ENCODE measurements at regions of chr14 and their contacts with region 1.

Region 1: GRCh38 chr14:103346286-103346685 is 12.2 kb downstream of the EIF5 start:
- DNase-seq: no peak
- ATAC-seq: peak in 1 of 2 experiments; percentile 8; a peak in 3 of 6 replicates
- H3K4me3 ChIP-seq: no peak overlapping the region
- H3K27ac ChIP-seq: no peak overlapping the region
- H3K4me1 ChIP-seq: no peaks in the 10 kb centered on the region
- CTCF ChIP-seq: no peak
- EP300 ChIP-seq: no peak
- POLR2A ChIP-seq: no peak
- RAD21 ChIP-seq: no peak

Region 2: GRCh38 chr14:103333754-103334643 is 12.3 kb before region 1 on chr14 and contains the start of gene EIF5:
- CTCF ChIA-PET with region 1: interaction called, 4 read pairs
- POLR2A ChIA-PET with region 1: interaction called, 66 read pairs
- DNase-seq: peak; percentile 86 to 99
- ATAC-seq: peak; percentile 94
- H3K4me3 ChIP-seq: peak within 1 kb of the TSS; percentile 93
- H3K27ac ChIP-seq: peak within 1 kb of the TSS; percentile 98 to 99
- H3K4me1 ChIP-seq: peaks cover 48% of the 10 kb centered on the region
- CTCF ChIP-seq: no peak
- EP300 ChIP-seq: no peak
- POLR2A ChIP-seq: peak; percentile 92
- RAD21 ChIP-seq: 0 out of 5 replicates have a peak, but pooled peaks of 1 of the 2 experiments have one; percentile 11
- polyA plus RNA-seq, gene EIF5: 509 and 591 TPM in 2 replicates

Measured in A549 (cell line).